ENCODE measurements at regions of chr12 and their contacts with region 1.

Region 1: DNA sequence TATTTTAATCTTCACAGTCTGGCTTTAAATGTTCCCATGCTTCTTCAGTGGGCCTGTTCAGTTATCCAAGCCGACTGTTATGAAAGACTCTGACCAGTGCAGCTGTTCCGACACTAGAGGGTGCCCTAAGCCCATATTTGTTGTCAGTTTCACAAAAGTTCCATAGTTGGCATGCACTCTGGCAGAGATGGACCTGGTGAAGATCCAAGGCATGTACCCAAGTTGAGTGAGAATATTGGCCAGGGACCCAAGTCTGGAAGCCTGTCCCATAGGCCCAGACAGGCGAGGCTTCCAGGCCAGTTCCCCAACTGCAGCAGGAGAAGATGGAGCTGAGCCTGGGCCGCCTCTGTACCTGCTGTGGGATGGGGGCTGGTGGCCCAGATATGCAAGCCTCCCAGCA is 27.4 kb upstream of the GUCY2C start:
- DNase-seq: peak; percentile 87
- H3K4me3 Mint-ChIP-seq: no peak overlapping the region
- H3K27ac Mint-ChIP-seq: no peak overlapping the region
- H3K4me1 Mint-ChIP-seq: peaks cover 2% of the 10 kb centered on the region
- H3K27me3 Mint-ChIP-seq: peaks cover 21% of the 10 kb centered on the region

Region 2: GRCh38 chr12:14995583-14996425 is 272.0 kb after region 1 on chr12:
- intact Hi-C with region 1: loop called (anchors 1 kb)
- DNase-seq: peak; percentile 64
- H3K4me3 Mint-ChIP-seq: no peak overlapping the region
- H3K27ac Mint-ChIP-seq: no peak overlapping the region
- H3K4me1 Mint-ChIP-seq: peaks cover 20% of the 10 kb centered on the region
- H3K27me3 Mint-ChIP-seq: peaks cover 24% of the 10 kb centered on the region

Region 3: GRCh38 chr12:15220994-15221885 is 497.5 kb after region 1 on chr12 and contains the start of gene RERG:
- intact Hi-C with region 1: loop called (anchors 1 kb)
- DNase-seq: peak; percentile 94
- H3K4me3 Mint-ChIP-seq: peak within 1 kb of the TSS; percentile 69
- H3K27ac Mint-ChIP-seq: no peak within 1 kb of the TSS
- H3K4me1 Mint-ChIP-seq: peaks cover 7% of the 10 kb centered on the region
- H3K27me3 Mint-ChIP-seq: peaks cover 48% of the 10 kb centered on the region
- total RNA-seq, gene RERG: not detected in 2 replicates

Region 4: DNA sequence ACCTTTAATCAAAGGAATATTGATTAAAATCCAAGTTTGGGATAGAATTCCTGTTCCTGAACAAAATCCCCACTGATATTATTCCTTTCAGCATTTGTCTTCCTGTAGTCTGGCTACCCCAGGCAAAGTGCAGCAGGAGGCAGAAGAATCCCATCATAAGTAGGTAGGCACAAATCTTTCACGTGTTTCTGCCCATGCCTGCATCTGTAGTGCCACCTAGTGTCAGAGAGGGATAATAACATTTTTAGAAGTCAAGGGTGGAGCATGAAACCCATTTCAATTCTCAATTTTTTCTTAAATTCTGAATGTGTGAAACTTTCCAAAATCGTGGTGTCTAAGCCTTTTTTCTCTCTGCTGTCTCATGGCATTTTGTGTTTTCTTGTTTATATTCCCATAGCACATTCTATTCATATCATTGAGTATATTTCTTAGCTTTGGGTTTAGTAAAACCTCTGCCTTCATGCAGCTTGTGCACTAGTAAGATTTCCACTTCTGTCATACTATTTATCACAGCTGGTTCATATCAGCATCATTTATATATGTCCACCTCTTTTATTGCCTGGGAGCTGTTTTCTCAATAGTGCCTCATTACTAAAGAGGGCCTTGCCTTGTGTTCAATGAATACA is 545.3 kb after region 1 on chr12:
- intact Hi-C with region 1: loop called (anchors 1 kb)
- DNase-seq: peak; percentile 75
- H3K4me3 Mint-ChIP-seq: no peak overlapping the region
- H3K27ac Mint-ChIP-seq: no peak overlapping the region
- H3K4me1 Mint-ChIP-seq: peaks cover 3% of the 10 kb centered on the region
- H3K27me3 Mint-ChIP-seq: no peaks in the 10 kb centered on the region

Measured in activated CD4-positive, alpha-beta T cell treated with anti-CD3 and anti-CD28 coated beads, Interleukin-2, amount 10 ng/mL, durations not matched to agents 24 days and 14 days (primary cell).